CD4-positive, alpha-beta T cell (primary cell): ENCODE measurements at regions of chr1 and their contacts with region 1.

Region 1: GRCh38 chr1:23019094-23019862 is at the start of gene KDM1A:
- DNase-seq: peak; percentile 92 to 97 (median 95)
- ATAC-seq: peak; percentile 97
- H3K4me3 ChIP-seq: peak within 1 kb of the TSS; percentile 86
- H3K4me3 Mint-ChIP-seq: peak within 1 kb of the TSS; percentile 99
- H3K27ac ChIP-seq: peak within 1 kb of the TSS; percentile 41 to 53
- H3K27ac Mint-ChIP-seq: peak within 1 kb of the TSS; percentile 88
- H3K4me1 ChIP-seq: peaks cover 27% of the 10 kb centered on the region
- H3K4me1 Mint-ChIP-seq: peaks cover 51% of the 10 kb centered on the region
- H3K27me3 ChIP-seq: no peaks in the 10 kb centered on the region
- H3K27me3 Mint-ChIP-seq: no peaks in the 10 kb centered on the region
- CTCF ChIP-seq: peak; percentile 25
- total RNA-seq, gene KDM1A: 38.3 to 42.4 TPM

Region 2: DNA sequence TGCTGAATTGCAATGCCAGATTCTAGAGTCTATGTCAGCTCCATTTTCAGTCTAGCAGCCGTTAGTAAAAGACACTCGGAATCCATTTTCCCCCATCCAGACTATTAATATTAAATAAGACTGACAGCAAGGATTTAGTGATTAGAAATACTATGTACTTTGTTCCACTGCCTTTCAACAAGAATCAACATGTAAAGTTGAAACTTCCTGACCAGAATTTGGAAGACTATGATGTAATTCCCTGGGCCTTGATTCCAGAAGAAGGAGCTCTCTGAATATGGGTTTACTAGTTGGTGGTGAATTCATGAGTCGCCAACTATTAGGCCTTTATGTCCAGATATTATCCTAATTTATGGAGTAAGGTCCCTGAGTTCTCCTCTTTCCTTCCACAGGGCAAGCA is 24.8 kb after region 1 on chr1:
- CTCF ChIA-PET with region 1: no interaction called
- POLR2A ChIA-PET with region 1: interaction called, 8 read pairs
- intact Hi-C with region 1: loop called in 1 of 2 experiments (anchors 2 kb)
- DNase-seq: no peak
- ATAC-seq: no peak
- H3K4me3 ChIP-seq: no peak overlapping the region
- H3K4me3 Mint-ChIP-seq: no peak overlapping the region
- H3K27ac ChIP-seq: no peak overlapping the region
- H3K27ac Mint-ChIP-seq: no peak overlapping the region
- H3K4me1 ChIP-seq: no peaks in the 10 kb centered on the region
- H3K4me1 Mint-ChIP-seq: peaks cover 39% of the 10 kb centered on the region
- H3K27me3 ChIP-seq: no peaks in the 10 kb centered on the region
- H3K27me3 Mint-ChIP-seq: no peaks in the 10 kb centered on the region
- CTCF ChIP-seq: no peak

Region 3: GRCh38 chr1:23114424-23115079 is 95.3 kb after region 1 on chr1:
- CTCF ChIA-PET with region 1: no interaction called
- POLR2A ChIA-PET with region 1: no interaction called
- intact Hi-C with region 1: no loop called
- DNase-seq: peak in 3 of 14 experiments; percentile 18 to 49 (median 34)
- ATAC-seq: no peak
- H3K4me3 ChIP-seq: no peak overlapping the region
- H3K4me3 Mint-ChIP-seq: no peak overlapping the region
- H3K27ac ChIP-seq: no peak overlapping the region
- H3K27ac Mint-ChIP-seq: peak overlapping the region; percentile 63
- H3K4me1 ChIP-seq: peaks cover 58% of the 10 kb centered on the region
- H3K4me1 Mint-ChIP-seq: peaks cover 71% of the 10 kb centered on the region
- H3K27me3 ChIP-seq: no peaks in the 10 kb centered on the region
- H3K27me3 Mint-ChIP-seq: no peaks in the 10 kb centered on the region
- CTCF ChIP-seq: no peak

Region 4: DNA sequence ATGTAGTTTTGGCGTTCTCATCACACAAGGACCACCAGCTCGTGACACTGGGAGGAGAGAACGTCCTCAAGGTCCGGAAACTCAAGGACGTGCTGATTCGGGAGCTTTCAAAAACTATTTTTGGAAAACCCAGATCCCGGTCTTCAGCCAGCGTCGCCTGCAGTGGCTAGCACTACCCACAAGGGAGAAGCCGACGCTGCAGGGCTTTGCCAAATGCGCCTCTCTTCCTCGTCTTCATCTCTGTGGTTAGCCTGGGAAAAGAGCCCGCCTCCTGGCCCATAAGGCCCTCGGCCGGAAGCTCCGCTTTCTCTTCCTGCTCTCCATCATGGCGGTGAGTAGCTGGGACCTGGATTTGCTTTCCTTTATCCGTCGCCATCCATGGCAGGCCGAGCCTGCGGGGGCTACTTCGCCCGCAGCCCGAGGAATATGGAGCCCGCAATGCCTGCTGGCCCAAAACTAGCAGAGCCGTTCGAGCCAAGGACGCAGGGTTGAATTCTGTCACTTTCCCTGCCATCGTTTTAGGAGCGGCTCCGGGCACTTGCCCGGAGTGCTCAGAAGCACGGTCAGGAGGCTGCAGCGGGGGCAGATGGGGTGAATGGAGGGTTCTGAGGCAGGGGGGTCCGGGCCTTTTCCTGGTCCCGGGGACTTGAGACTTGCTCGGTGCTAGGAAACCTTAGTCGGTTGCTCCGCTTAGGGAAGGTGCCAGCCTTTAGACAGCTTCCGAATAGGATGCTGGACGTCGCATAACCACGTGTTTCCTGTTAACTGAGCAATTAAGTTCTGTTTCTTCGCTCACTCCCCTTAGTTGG is 672.4 kb after region 1 on chr1 and contains the start of gene RPL11:
- CTCF ChIA-PET with region 1: interaction called, 3 read pairs
- POLR2A ChIA-PET with region 1: interaction called, 5 read pairs
- intact Hi-C with region 1: loop called in 1 of 2 experiments (anchors 2 kb)
- DNase-seq: peak; percentile 78 to 95 (median 85)
- ATAC-seq: peak; percentile 99
- H3K4me3 ChIP-seq: peak within 1 kb of the TSS; percentile 97
- H3K4me3 Mint-ChIP-seq: peak within 1 kb of the TSS; percentile 99
- H3K27ac ChIP-seq: peak within 1 kb of the TSS; percentile 55 to 87
- H3K27ac Mint-ChIP-seq: peak within 1 kb of the TSS; percentile 95
- H3K4me1 ChIP-seq: peaks cover 40% of the 10 kb centered on the region
- H3K4me1 Mint-ChIP-seq: peaks cover 47% of the 10 kb centered on the region
- H3K27me3 ChIP-seq: no peaks in the 10 kb centered on the region
- H3K27me3 Mint-ChIP-seq: no peaks in the 10 kb centered on the region
- CTCF ChIP-seq: peak; percentile 67
- total RNA-seq, gene RPL11: 2,191 to 2,374 TPM

Region 5: GRCh38 chr1:23777979-23778814 is 758.9 kb after region 1 on chr1 and contains the start of gene PITHD1:
- CTCF ChIA-PET with region 1: no interaction called
- POLR2A ChIA-PET with region 1: no interaction called
- intact Hi-C with region 1: no loop called
- DNase-seq: peak; percentile 58 to 94 (median 78)
- ATAC-seq: peak; percentile 80
- H3K4me3 ChIP-seq: peak within 1 kb of the TSS; percentile 80
- H3K4me3 Mint-ChIP-seq: peak within 1 kb of the TSS; percentile 92
- H3K27ac ChIP-seq: peak within 1 kb of the TSS; percentile 81 to 89
- H3K27ac Mint-ChIP-seq: peak within 1 kb of the TSS; percentile 98
- H3K4me1 ChIP-seq: peaks cover 34% of the 10 kb centered on the region
- H3K4me1 Mint-ChIP-seq: peaks cover 46% of the 10 kb centered on the region
- H3K27me3 ChIP-seq: no peaks in the 10 kb centered on the region
- H3K27me3 Mint-ChIP-seq: no peaks in the 10 kb centered on the region
- CTCF ChIP-seq: no peak
- total RNA-seq, gene PITHD1: 110 to 111 TPM